Activated naive CD4-positive, alpha-beta T cell treated with anti-CD3 and anti-CD28 coated beads, Interleukin-2, amount 10 ng/mL, durations not matched to agents 7 days and 5 days (primary cell): ENCODE measurements at regions of chr11 and their contacts with region 1.

Region 1: GRCh38 chr11:61332797-61333549 is at the starts of genes DDB1 and TKFC:
- DNase-seq: peak; percentile 98
- H3K4me3 Mint-ChIP-seq: peak within 1 kb of the TSS; percentile 93
- H3K27ac Mint-ChIP-seq: peak within 1 kb of the TSS; percentile 97
- H3K4me1 Mint-ChIP-seq: peaks cover 72% of the 10 kb centered on the region
- H3K27me3 Mint-ChIP-seq: no peaks in the 10 kb centered on the region

Region 2: GRCh38 chr11:61254403-61255025 is 78.5 kb before region 1 on chr11:
- CTCF ChIA-PET with region 1: interaction called, 13 read pairs
- DNase-seq: peak; percentile 80
- H3K4me3 Mint-ChIP-seq: no peak overlapping the region
- H3K27ac Mint-ChIP-seq: no peak overlapping the region
- H3K4me1 Mint-ChIP-seq: no peaks in the 10 kb centered on the region
- H3K27me3 Mint-ChIP-seq: peaks cover 5% of the 10 kb centered on the region

Region 3: GRCh38 chr11:61361686-61362541 is 28.9 kb after region 1 on chr11 and contains the starts of genes CYB561A3 and TMEM138:
- CTCF ChIA-PET with region 1: interaction called, 48 read pairs
- DNase-seq: peak; percentile 95
- H3K4me3 Mint-ChIP-seq: peak within 1 kb of the TSS; percentile 100
- H3K27ac Mint-ChIP-seq: peak within 1 kb of the TSS; percentile 99
- H3K4me1 Mint-ChIP-seq: peaks cover 49% of the 10 kb centered on the region
- H3K27me3 Mint-ChIP-seq: no peaks in the 10 kb centered on the region

Region 4: GRCh38 chr11:61392981-61393595 is 60.1 kb after region 1 on chr11:
- CTCF ChIA-PET with region 1: interaction called, 309 read pairs
- DNase-seq: peak; percentile 34
- H3K4me3 Mint-ChIP-seq: peak overlapping the region; percentile 85
- H3K27ac Mint-ChIP-seq: peak overlapping the region; percentile 87
- H3K4me1 Mint-ChIP-seq: peaks cover 26% of the 10 kb centered on the region
- H3K27me3 Mint-ChIP-seq: no peaks in the 10 kb centered on the region

Region 5: DNA sequence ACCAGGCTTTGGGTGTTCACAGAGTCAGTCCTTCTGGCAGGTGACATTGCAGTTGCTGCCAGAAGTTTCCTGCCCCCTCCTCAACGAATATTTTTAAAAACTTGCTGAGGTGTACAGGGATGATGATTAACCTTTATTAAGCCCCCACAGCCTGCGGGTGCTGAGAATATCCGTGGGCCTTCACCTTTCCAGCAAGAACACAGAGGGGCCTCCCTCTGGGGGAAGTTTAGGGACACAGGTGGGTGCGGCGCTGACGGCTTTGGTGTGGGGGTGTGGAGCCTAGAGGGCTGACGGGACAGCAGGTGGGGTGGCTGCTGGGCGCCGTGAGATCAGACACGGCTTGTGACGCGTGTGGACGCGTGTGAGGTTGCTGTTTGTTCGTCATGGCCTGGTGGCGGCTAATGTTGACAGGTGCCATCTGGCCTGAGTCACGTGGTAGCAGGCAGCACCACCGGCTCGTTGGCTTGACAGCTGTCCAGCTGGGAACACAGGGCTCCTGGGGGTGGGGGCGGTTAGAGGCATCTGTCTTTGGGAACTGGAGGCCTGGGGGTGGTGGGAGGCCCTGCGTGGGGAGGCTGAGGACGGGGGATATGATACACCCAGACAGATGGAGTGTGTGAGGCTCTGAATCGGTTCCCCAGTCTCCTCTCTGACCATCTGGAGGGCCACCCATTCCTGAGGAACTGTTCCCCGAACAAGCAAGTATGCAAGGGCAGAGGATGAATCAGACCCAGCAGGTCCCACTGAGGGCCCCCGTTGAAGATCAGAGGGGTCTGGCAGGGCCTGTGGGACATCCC is 163.0 kb after region 1 on chr11:
- CTCF ChIA-PET with region 1: no interaction called
- DNase-seq: no peak
- H3K4me3 Mint-ChIP-seq: no peak overlapping the region
- H3K27ac Mint-ChIP-seq: no peak overlapping the region
- H3K4me1 Mint-ChIP-seq: no peaks in the 10 kb centered on the region
- H3K27me3 Mint-ChIP-seq: no peaks in the 10 kb centered on the region

Region 6: GRCh38 chr11:61516675-61517572 is 184.0 kb after region 1 on chr11:
- CTCF ChIA-PET with region 1: interaction called, 15 read pairs
- DNase-seq: peak; percentile 58
- H3K4me3 Mint-ChIP-seq: no peak overlapping the region
- H3K27ac Mint-ChIP-seq: no peak overlapping the region
- H3K4me1 Mint-ChIP-seq: peaks cover 7% of the 10 kb centered on the region
- H3K27me3 Mint-ChIP-seq: peaks cover 42% of the 10 kb centered on the region